ENCODE measurements at regions of chr4 and their contacts with region 1.

Region 1: GRCh38 chr4:102760645-102761295 is at the start of gene MANBA:
- DNase-seq: peak; percentile 54 to 83
- H3K4me3 ChIP-seq: peak within 1 kb of the TSS; percentile 73 to 94 (median 85)
- H3K27ac ChIP-seq: peak within 1 kb of the TSS; percentile 63; the same call in 1 of the 2 replicates
- H3K4me1 ChIP-seq: peaks cover 0 to 7% (median 1%) of the 10 kb centered on the region in 4 experiments; a peak in 3 of 7 replicates
- H3K27me3 ChIP-seq: no peaks in the 10 kb centered on the region
- CTCF ChIP-seq: no peak
- EP300 ChIP-seq: no peak
- POLR2A ChIP-seq: peak; percentile 78 to 89
- RAD21 ChIP-seq: no peak; a peak in 1 of 4 replicates
- total RNA-seq, gene MANBA: 25.9 and 27.8 TPM in 2 replicates

Region 2: GRCh38 chr4:102789317-102789717 is 28.5 kb after region 1 on chr4:
- CTCF ChIA-PET with region 1: no interaction called
- POLR2A ChIA-PET with region 1: interaction called, 13 read pairs
- DNase-seq: no peak
- H3K4me3 ChIP-seq: no peak overlapping the region
- H3K27ac ChIP-seq: no peak overlapping the region
- H3K4me1 ChIP-seq: no peaks in the 10 kb centered on the region
- H3K27me3 ChIP-seq: no peaks in the 10 kb centered on the region
- CTCF ChIP-seq: no peak
- EP300 ChIP-seq: no peak
- POLR2A ChIP-seq: no peak
- RAD21 ChIP-seq: no peak

Region 3: DNA sequence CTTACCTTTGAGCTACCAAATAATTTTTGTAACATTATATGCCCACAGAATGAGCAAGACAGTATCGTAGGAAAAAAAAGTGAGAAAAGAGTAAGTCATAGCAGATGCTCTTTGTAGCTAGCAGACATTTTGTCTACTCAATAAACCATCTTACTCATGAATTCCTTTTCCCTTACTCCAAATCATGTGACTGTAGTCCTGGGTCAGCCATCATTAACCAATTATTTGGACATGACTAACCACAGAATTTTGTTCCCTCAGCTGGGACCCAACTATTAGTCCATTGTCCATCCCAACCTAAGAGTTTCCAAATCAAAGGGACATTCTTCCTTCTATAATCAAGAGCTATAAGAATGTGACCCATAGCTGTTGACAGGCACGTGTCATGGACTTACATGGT is 55.2 kb after region 1 on chr4:
- CTCF ChIA-PET with region 1: no interaction called
- POLR2A ChIA-PET with region 1: interaction called, 20 read pairs
- DNase-seq: no peak
- H3K4me3 ChIP-seq: no peak overlapping the region
- H3K27ac ChIP-seq: no peak overlapping the region
- H3K4me1 ChIP-seq: peaks cover 0 to 16% (median 5%) of the 10 kb centered on the region in 4 experiments; a peak in 4 of 7 replicates
- H3K27me3 ChIP-seq: no peaks in the 10 kb centered on the region
- CTCF ChIP-seq: no peak
- EP300 ChIP-seq: no peak
- POLR2A ChIP-seq: no peak
- RAD21 ChIP-seq: no peak

Region 4: DNA sequence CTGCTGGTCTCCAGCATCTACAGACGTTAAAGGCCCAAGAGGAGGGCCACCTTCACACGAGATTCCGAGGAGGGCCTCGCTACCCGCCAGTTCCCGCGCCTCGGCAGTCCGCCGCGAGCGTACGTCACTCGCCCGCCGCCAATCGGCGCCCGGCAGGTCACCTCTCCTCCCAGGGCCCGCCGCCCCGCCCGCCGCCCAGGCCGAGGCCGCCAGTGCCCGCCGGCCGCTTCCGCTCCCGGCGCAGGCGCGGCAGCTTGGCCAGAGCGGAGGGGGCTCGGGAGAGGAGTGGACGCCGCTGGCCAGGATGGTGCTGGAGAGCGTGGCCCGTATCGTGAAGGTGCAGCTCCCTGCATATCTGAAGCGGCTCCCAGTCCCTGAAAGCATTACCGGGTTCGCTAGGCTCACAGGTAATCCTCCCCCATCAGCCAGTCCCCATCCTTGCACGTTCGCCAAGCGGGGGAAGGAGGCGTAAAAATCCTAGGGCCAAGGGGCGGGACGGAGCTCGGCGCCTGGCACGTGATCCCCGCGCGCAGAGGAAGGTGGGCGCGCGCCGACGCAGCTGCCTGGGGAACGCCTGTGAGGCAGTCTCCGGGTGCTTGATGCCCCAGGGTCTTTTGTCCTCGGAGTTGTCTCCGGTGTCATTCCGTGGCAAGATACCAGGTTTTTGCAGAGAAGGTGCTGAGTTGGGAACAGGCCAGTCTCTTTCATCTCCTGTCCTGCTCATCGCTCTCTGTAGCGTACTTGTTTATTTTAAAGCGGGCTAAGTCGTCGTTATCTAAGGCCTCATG is 108.2 kb after region 1 on chr4 and contains the start of gene CISD2:
- CTCF ChIA-PET with region 1: no interaction called
- POLR2A ChIA-PET with region 1: interaction called, 13 read pairs
- DNase-seq: peak; percentile 66 to 92
- H3K4me3 ChIP-seq: peak within 1 kb of the TSS; percentile 73 to 86 (median 78)
- H3K27ac ChIP-seq: peak within 1 kb of the TSS; percentile 98
- H3K4me1 ChIP-seq: 0 out of 7 replicates have a peak, but pooled peaks cover 0 to 2% (median 0%) of the 10 kb centered on the region in 4 experiments
- H3K27me3 ChIP-seq: no peaks in the 10 kb centered on the region
- CTCF ChIP-seq: no peak
- EP300 ChIP-seq: no peak
- POLR2A ChIP-seq: peak; percentile 97 to 99
- RAD21 ChIP-seq: no peak; a peak in 1 of 4 replicates
- total RNA-seq, gene CISD2: 47.5 and 48.3 TPM in 2 replicates

Measured in H1 (cell line).